WTC11 (cell line): ENCODE measurements at regions of chr14 and their contacts with region 1.

Region 1: DNA sequence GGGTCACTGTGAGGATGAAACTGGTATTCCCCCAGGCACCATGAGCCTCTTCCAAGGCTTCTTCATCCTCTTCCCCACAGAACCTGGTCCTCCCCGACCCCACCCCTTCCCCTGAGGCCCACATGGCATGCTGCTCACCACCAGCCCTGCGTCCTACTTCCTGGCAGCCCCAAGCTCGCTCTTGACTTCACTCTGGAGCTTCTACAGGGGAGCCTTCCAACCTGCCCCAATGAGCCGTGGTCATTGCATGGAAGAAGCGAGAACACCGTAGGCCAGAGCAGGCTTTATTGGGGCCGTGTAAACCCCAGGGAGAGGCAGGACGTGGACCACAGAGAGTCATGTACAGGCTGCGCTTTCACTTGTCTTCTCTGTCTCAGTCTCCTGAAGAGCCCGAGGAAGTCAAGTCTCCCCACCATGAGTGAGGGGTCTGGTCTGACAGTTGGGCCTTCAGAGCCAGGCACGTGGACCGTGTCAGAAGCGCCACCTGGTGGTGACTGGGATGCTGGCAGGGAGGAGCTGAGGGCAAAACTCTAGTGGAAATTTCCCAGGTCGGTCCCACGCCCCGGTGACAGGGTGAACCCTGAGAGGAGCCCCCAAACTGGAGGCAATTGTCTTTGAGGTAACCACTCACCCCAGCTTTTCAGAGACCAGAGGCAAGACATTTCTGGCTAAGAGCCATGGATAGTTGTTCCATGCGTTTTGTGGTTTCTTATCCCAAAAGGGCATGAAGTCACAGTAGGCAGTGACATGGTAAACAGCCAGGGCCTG is 17.5 kb downstream of the RPS6KL1 start:
- DNase-seq: peak; percentile 84
- ATAC-seq: peak; percentile 58
- H3K4me3 Mint-ChIP-seq: no peak overlapping the region
- H3K27ac Mint-ChIP-seq: 0 out of 2 replicates have a peak overlapping the region, but pooled peaks have one; percentile 41
- H3K4me1 Mint-ChIP-seq: peaks cover 13% of the 10 kb centered on the region
- H3K27me3 Mint-ChIP-seq: no peaks in the 10 kb centered on the region
- CTCF ChIP-seq: peak; percentile 95

Region 2: DNA sequence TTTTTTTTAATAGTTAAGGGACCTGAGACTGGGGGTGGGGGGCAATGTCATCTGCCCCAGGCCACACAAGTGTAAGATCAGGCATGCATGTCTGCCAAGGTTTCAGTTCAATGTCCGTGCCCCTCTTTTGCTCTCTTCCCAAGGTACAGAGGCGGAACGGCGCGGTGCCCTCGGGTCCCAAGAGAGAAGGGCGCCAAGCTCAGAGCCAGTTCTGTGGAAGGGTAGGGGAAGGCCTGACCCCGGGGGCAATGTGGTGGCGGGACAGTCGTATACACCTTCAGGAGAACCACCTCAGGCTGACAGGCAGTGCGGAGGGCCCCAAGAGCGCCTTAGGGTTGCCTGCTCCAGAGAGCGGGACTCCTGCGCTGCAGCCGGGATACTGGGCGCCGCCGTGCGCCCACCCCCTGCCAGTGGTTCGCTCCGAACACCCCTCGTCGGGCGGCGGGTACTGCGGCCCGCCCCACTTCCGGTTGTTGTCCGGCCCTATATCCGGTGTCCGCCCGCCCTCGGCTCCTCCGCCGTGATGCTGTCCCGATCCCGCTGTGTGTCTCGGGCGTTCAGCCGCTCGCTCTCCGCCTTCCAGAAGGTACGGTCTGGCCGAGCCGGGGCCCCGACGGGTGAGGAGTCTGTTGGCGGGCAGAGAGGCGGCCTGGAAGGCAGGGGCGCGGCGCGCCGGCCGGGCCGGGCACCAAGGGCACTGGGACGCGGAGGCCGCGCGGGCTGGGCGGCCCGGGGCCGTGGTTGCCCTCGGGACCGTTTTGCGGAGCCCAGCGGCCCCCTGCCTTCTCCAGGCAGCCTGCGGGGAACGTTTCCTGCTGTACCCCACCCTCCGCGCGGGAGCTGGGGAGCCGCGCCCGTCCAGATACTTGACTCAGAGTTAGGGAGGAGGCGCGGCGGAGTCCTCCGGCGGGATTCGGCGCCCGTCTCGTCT is 23.9 kb before region 1 on chr14 and contains the start of gene DLST:
- CTCF ChIA-PET with region 1: interaction called, 36 read pairs
- POLR2A ChIA-PET with region 1: interaction called, 7 read pairs
- DNase-seq: peak; percentile 89
- ATAC-seq: peak; percentile 83
- H3K4me3 Mint-ChIP-seq: peak within 1 kb of the TSS; percentile 100
- H3K27ac Mint-ChIP-seq: peak within 1 kb of the TSS; percentile 98
- H3K4me1 Mint-ChIP-seq: peaks cover 51% of the 10 kb centered on the region
- H3K27me3 Mint-ChIP-seq: no peaks in the 10 kb centered on the region
- CTCF ChIP-seq: no peak
- total RNA-seq, gene DLST: 112 to 121 TPM (median 119 TPM) in 3 replicates

Region 3: GRCh38 chr14:74893614-74894091 is 11.9 kb before region 1 on chr14:
- CTCF ChIA-PET with region 1: interaction called, 12 read pairs
- POLR2A ChIA-PET with region 1: no interaction called
- DNase-seq: no peak
- ATAC-seq: no peak
- H3K4me3 Mint-ChIP-seq: no peak overlapping the region
- H3K27ac Mint-ChIP-seq: no peak overlapping the region
- H3K4me1 Mint-ChIP-seq: peaks cover 3% of the 10 kb centered on the region
- H3K27me3 Mint-ChIP-seq: no peaks in the 10 kb centered on the region
- CTCF ChIP-seq: no peak

Region 4: DNA sequence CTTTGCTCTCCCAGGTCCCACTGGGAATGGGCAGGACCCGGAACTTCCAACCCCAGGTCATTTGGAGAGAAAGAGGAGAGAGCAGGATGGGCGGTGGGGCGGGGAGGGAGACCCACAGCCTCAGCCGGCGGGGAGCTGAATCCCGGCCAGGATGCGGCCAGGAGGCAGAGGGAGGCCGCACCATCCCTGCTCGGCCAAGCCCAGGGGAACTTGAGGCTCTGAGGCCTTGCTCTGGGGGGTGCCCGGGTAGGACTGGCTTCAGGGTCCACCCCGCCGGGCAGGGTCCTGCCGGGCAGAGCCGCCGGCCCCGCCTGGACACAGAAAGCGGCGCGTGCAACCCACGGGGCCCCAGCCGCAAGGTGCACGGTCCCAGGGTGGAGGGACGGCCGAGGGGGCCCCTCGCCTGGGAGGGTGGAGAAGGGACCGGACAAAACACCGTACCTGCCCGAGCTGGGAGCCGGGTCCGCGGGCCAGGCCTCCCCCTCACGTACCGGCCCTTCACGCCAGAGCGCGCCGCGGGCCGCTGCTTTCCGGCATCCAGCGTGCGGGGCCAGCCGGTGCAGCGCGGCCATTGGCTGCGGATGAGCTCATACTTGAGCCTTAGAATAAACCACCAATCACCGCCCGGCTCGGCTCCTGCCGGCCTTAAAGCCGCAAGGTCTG is 17.3 kb after region 1 on chr14 and contains the start of gene RPS6KL1:
- CTCF ChIA-PET with region 1: interaction called, 62 read pairs
- POLR2A ChIA-PET with region 1: no interaction called
- DNase-seq: peak; percentile 89
- ATAC-seq: peak; percentile 98
- H3K4me3 Mint-ChIP-seq: peak within 1 kb of the TSS; percentile 87
- H3K27ac Mint-ChIP-seq: no peak within 1 kb of the TSS
- H3K4me1 Mint-ChIP-seq: 0 out of 2 replicates have a peak, but pooled peaks cover 3% of the 10 kb centered on the region
- H3K27me3 Mint-ChIP-seq: peaks cover 3% of the 10 kb centered on the region; the same call in 1 of the 2 replicates
- CTCF ChIP-seq: no peak
- total RNA-seq, gene RPS6KL1: 10.6 to 12.6 TPM (median 12.2 TPM) in 3 replicates

Region 5: GRCh38 chr14:75088574-75089373 is 183.2 kb after region 1 on chr14:
- CTCF ChIA-PET with region 1: interaction called, 22 read pairs
- POLR2A ChIA-PET with region 1: no interaction called
- DNase-seq: peak; percentile 36
- ATAC-seq: peak; percentile 82
- H3K4me3 Mint-ChIP-seq: no peak overlapping the region
- H3K27ac Mint-ChIP-seq: peak overlapping the region; percentile 53; the same call in 1 of the 2 replicates
- H3K4me1 Mint-ChIP-seq: peaks cover 6% of the 10 kb centered on the region
- H3K27me3 Mint-ChIP-seq: no peaks in the 10 kb centered on the region
- CTCF ChIP-seq: no peak; the same call in 1 of the 2 replicates